Motor neuron (in vitro differentiated cells): ENCODE measurements at regions of chr13 and their contacts with region 1.

Region 1: GRCh38 chr13:43786773-43787517 is at the start of gene ENOX1:
- ATAC-seq: peak; percentile 52 to 80 (median 77)
- H3K4me3 ChIP-seq: peak within 1 kb of the TSS; percentile 54 to 81 (median 71)
- H3K27ac ChIP-seq: peak within 1 kb of the TSS; percentile 66 to 68
- H3K4me1 ChIP-seq: peaks cover 15 to 31% of the 10 kb centered on the region in 2 donors
- total RNA-seq, gene ENOX1: 5.6 to 19.0 (median 11.8) TPM

Region 2: DNA sequence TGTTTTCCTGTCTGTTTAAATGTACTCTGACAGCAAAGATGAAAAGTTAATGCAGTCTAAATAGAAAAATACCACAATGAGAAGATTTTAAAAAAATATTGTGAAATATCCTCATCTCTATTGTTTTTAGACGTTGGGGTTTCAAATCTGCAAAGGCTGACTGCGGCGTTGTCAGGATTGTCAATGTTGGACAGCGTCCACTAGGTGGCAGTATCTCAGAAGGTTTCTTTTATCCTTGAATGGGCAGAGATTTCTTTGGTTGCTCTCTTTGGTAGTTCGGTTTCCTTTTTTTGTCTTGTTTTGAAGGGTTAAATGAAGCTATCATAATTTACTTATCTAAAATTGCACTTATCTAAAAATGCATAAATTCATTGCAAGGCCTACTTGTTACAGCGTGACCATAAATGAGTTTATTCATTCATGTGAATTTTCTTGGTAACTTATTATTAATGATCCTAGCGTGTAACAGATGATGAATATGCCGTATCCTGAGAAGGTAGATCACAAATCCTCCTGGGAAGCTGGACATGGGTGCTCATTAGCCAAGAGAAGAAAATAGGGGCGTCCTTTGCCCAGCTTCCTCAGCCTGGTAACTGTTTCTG is 1191.9 kb before region 1 on chr13:
- in situ Hi-C with region 1: loop called in 1 of 9 experiments (anchors 25 kb)
- ATAC-seq: peak; percentile 53 to 83 (median 66)
- H3K4me3 ChIP-seq: no peak overlapping the region
- H3K27ac ChIP-seq: no peak overlapping the region
- H3K4me1 ChIP-seq: peaks cover 4 to 13% of the 10 kb centered on the region in 2 donors

Region 3: GRCh38 chr13:43085545-43085944 is 701.4 kb before region 1 on chr13:
- in situ Hi-C with region 1: loop called in 2 of 9 experiments (anchors 25 kb)
- ATAC-seq: no peak
- H3K4me3 ChIP-seq: no peak overlapping the region
- H3K27ac ChIP-seq: no peak overlapping the region
- H3K4me1 ChIP-seq: peaks cover 0 to 2% of the 10 kb centered on the region in 2 donors

Region 4: GRCh38 chr13:43116242-43116641 is 670.7 kb before region 1 on chr13:
- in situ Hi-C with region 1: loop called in 1 of 9 experiments (anchors 25 kb)
- ATAC-seq: no peak
- H3K4me3 ChIP-seq: no peak overlapping the region
- H3K27ac ChIP-seq: no peak overlapping the region
- H3K4me1 ChIP-seq: peaks cover 16 to 29% of the 10 kb centered on the region in 2 donors

Region 5: DNA sequence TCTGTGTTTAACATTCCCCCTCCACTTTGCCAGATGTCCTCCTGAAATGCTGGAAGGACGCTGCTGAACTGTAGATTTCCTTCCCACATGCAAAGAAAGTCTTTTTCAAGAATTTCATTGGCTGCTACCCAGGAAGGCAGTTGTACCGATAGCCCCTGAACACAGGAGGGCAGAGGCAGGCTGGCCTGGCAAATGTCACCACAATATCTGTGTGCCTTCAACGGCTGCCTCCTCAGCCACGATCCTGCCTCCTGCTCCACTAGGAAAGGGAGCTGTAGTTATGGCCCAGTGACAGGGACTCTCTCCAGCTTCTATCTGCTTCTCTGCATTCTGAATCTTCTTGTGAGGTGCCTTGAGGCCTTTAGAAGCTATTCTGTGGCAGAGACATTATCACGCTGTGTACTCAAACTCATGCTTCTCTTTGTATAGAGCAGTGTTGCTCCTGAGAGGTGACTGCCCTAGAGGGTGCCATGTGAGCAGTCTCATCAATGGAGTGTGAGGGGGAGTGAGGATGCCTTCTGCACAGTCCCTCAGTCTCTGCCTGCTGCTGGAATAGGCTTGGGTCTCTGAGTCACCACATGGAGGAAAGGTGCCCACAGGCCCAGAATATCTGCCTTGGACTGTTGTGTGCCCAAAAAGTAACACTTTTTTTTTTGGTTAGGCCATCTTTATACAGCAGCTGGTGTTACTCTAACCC is 483.8 kb before region 1 on chr13:
- in situ Hi-C with region 1: loop called in 1 of 9 experiments (anchors 25 kb)
- ATAC-seq: peak; percentile 40 to 89 (median 82)
- H3K4me3 ChIP-seq: no peak overlapping the region
- H3K27ac ChIP-seq: no peak overlapping the region
- H3K4me1 ChIP-seq: peaks cover 23 to 26% of the 10 kb centered on the region in 2 donors